ENCODE measurements at regions of chr7 and their contacts with region 1.

Region 1: GRCh38 chr7:50349963-50350944 is 45.7 kb downstream of the IKZF1 start:
- DNase-seq: peak; percentile 94
- H3K4me3 Mint-ChIP-seq: peak overlapping the region; percentile 14
- H3K27ac Mint-ChIP-seq: peak overlapping the region; percentile 92
- H3K4me1 Mint-ChIP-seq: peaks cover 98% of the 10 kb centered on the region
- H3K27me3 Mint-ChIP-seq: no peaks in the 10 kb centered on the region

Region 2: DNA sequence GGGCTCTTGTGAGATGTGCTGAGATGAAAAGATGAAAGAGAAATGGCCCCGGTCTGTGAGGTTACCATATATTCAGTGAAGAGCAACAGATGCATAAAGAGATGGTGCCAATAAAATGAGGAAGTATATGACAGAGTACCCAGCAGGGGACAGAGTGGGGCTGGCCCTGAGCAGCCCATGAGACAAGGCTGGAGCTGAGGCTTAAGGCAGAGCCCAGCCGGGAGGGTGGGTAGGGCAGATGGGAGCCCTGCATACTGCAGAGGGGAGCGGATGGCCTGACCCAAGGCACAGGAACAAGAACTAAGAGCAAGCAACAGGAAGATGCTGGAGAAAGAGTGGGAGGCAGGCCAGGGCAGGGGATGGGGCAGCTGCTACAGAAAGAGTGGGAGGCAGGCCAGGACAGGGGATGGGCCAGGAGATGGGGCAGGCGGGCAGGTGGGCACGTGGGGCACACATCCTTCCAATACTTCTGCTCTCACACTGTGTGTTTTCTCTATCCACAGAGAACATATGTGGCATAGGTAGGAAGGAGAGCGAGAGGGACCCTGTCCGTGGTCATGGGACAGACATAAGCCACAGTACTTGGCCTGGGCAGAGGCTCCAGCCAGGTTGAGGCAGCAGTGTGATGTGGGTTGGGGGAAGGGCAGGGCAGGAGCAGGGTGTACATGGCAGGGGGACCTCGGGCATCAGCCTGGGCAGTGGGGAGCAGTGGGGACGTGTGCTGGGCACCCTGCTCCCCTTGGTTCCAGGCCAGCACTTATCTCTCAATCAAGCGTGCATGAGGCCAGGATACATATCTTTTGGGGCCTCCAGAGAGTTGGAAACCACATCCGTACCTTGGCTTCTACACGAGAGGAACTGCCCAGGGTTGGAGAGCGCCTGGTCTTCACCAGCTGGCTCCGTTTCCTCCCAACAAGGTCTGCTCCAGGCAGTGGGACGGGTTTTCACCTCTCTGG is 137.3 kb before region 1 on chr7:
- CTCF ChIA-PET with region 1: no interaction called
- POLR2A ChIA-PET with region 1: interaction called, 19 read pairs
- intact Hi-C with region 1: loop called (anchors 1 kb)
- DNase-seq: peak; percentile 47
- H3K4me3 Mint-ChIP-seq: peak overlapping the region; percentile 28
- H3K27ac Mint-ChIP-seq: peak overlapping the region; percentile 71
- H3K4me1 Mint-ChIP-seq: peaks cover 84% of the 10 kb centered on the region
- H3K27me3 Mint-ChIP-seq: no peaks in the 10 kb centered on the region

Region 3: GRCh38 chr7:50317221-50317678 is 33.0 kb before region 1 on chr7:
- CTCF ChIA-PET with region 1: interaction called, 10 read pairs
- POLR2A ChIA-PET with region 1: interaction called, 157 read pairs
- intact Hi-C with region 1: loop called (anchors 1 kb)
- DNase-seq: peak; percentile 75
- H3K4me3 Mint-ChIP-seq: peak overlapping the region; percentile 86
- H3K27ac Mint-ChIP-seq: peak overlapping the region; percentile 94
- H3K4me1 Mint-ChIP-seq: peaks cover 92% of the 10 kb centered on the region
- H3K27me3 Mint-ChIP-seq: no peaks in the 10 kb centered on the region

Region 4: GRCh38 chr7:50335795-50336754 is 14.2 kb before region 1 on chr7:
- CTCF ChIA-PET with region 1: interaction called, 65 read pairs
- POLR2A ChIA-PET with region 1: interaction called, 106 read pairs
- intact Hi-C with region 1: loop called (anchors 1 kb)
- DNase-seq: peak; percentile 93
- H3K4me3 Mint-ChIP-seq: no peak overlapping the region
- H3K27ac Mint-ChIP-seq: no peak overlapping the region
- H3K4me1 Mint-ChIP-seq: peaks cover 2% of the 10 kb centered on the region
- H3K27me3 Mint-ChIP-seq: no peaks in the 10 kb centered on the region

Region 5: GRCh38 chr7:50359995-50360925 is 10.0 kb after region 1 on chr7:
- CTCF ChIA-PET with region 1: interaction called, 167 read pairs
- POLR2A ChIA-PET with region 1: interaction called, 487 read pairs
- intact Hi-C with region 1: loop called (anchors 1 kb)
- DNase-seq: peak; percentile 90
- H3K4me3 Mint-ChIP-seq: peak overlapping the region; percentile 61
- H3K27ac Mint-ChIP-seq: peak overlapping the region; percentile 97
- H3K4me1 Mint-ChIP-seq: peaks cover 98% of the 10 kb centered on the region
- H3K27me3 Mint-ChIP-seq: no peaks in the 10 kb centered on the region

Region 6: GRCh38 chr7:50369143-50370026 is 19.1 kb after region 1 on chr7:
- CTCF ChIA-PET with region 1: interaction called, 167 read pairs
- POLR2A ChIA-PET with region 1: interaction called, 487 read pairs
- intact Hi-C with region 1: loop called (anchors 1 kb)
- DNase-seq: peak; percentile 56
- H3K4me3 Mint-ChIP-seq: no peak overlapping the region
- H3K27ac Mint-ChIP-seq: peak overlapping the region; percentile 93
- H3K4me1 Mint-ChIP-seq: peaks cover 97% of the 10 kb centered on the region
- H3K27me3 Mint-ChIP-seq: no peaks in the 10 kb centered on the region

Region 7: GRCh38 chr7:50507898-50508470 is 157.7 kb after region 1 on chr7:
- CTCF ChIA-PET with region 1: no interaction called
- POLR2A ChIA-PET with region 1: no interaction called
- intact Hi-C with region 1: no loop called
- DNase-seq: no peak
- H3K4me3 Mint-ChIP-seq: no peak overlapping the region
- H3K27ac Mint-ChIP-seq: no peak overlapping the region
- H3K4me1 Mint-ChIP-seq: no peaks in the 10 kb centered on the region
- H3K27me3 Mint-ChIP-seq: no peaks in the 10 kb centered on the region

Measured in activated CD4-positive, alpha-beta memory T cell treated with anti-CD3 and anti-CD28 coated beads for 36 hours (primary cell).